Vagina (tissue), 2 donors: ENCODE measurements at regions of chr15 and their contacts with region 1.

Region 1: DNA sequence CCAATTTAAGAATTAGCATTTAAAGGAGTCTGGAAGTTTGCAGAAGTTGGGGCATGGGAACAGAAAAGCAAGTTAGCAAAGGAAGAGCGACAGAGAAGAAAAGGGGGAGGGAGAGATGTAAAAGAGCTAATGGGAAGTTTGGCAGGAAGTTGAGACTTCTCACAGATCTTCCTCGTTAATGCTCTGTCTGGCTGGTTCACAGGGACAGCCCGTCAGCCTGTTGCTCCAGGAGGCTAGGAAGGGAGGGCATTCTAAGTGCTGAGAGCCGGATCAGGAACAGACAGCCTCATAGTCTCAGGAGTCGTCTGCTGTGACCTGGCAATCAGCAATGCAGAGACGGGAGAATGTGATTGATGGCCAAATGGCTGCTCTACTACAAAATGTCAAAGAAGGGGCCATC is 150.3 kb downstream of the AGBL1 start:
- DNase-seq: no peak
- H3K4me3 ChIP-seq: no peak overlapping the region
- H3K27ac ChIP-seq: no peak overlapping the region
- H3K4me1 ChIP-seq: no peaks in the 10 kb centered on the region
- H3K27me3 ChIP-seq: no peaks in the 10 kb centered on the region
- CTCF ChIP-seq: no peak
- POLR2A ChIP-seq: no peak

Region 2: GRCh38 chr15:86255247-86255646 is 25.3 kb after region 1 on chr15:
- intact Hi-C with region 1: loop called (anchors 1 kb)
- DNase-seq: no peak
- H3K4me3 ChIP-seq: no peak overlapping the region
- H3K27ac ChIP-seq: no peak overlapping the region
- H3K4me1 ChIP-seq: no peaks in the 10 kb centered on the region
- H3K27me3 ChIP-seq: no peaks in the 10 kb centered on the region
- CTCF ChIP-seq: no peak
- POLR2A ChIP-seq: no peak

Region 3: DNA sequence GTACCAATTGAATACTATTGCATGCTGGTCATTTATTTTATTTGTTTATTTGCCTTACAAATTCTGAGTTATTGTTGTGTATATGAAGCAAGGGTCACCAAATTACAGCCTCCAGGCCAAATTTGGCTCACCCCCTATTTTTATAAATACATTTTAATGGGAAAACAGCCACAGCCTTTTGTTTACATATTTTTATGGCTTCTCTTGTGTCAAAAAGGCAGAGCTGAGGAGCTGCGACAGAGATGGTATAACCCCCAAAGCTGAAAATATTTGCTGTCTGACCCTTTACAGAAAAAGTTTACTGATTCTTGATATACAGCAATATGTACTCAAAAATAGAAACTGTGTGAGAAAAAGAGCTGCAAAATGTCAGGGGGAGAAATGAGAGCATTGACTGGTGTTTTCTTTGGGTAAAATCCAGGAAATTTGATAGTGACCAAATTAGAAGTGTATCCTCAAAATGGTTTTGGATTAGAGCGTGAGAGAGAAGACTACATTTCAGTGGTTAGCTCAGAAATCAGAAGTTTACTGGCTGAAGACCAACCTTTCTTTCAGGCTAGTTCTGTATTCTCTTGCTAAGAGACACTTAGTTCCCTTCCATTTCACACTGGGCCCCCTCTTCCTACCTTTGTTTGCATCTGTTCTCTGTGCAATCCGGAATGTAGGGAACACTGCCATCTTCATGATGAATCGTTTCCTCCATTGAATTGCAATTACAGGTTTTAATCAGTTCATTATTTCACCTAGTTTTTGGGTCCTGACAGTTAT is 607.5 kb after region 1 on chr15:
- intact Hi-C with region 1: no loop called
- DNase-seq: no peak
- H3K4me3 ChIP-seq: no peak overlapping the region
- H3K27ac ChIP-seq: no peak overlapping the region
- H3K4me1 ChIP-seq: no peaks in the 10 kb centered on the region
- H3K27me3 ChIP-seq: no peaks in the 10 kb centered on the region
- CTCF ChIP-seq: no peak
- POLR2A ChIP-seq: no peak